GM12878 (cell line): ENCODE measurements at regions of chr1 and their contacts with region 1.

Region 1: GRCh38 chr1:48572646-48573261 is 100.8 kb upstream of the SPATA6 start:
- DNase-seq: no peak
- ATAC-seq: peak; percentile 91
- H3K4me3 ChIP-seq: no peak overlapping the region
- H3K27ac ChIP-seq: no peak overlapping the region
- H3K4me1 ChIP-seq: no peaks in the 10 kb centered on the region
- H3K27me3 ChIP-seq: no peaks in the 10 kb centered on the region; a peak in 1 of 4 replicates
- CTCF ChIP-seq: peak; percentile 62 to 66 (median 64); a peak in 5 of 6 replicates
- EP300 ChIP-seq: no peak
- POLR2A ChIP-seq: no peak
- RAD21 ChIP-seq: peak; percentile 72

Region 2: GRCh38 chr1:48697066-48697707 is 124.4 kb after region 1 on chr1:
- CTCF ChIA-PET with region 1: interaction called, 39 read pairs
- POLR2A ChIA-PET with region 1: no interaction called
- RAD21 ChIA-PET with region 1: no interaction called
- SMC1A ChIA-PET with region 1: interaction called, 3 read pairs
- in situ Hi-C with region 1: no loop called
- intact Hi-C with region 1: loop called (anchors 1 kb)
- DNase-seq: no peak
- ATAC-seq: peak; percentile 85
- H3K4me3 ChIP-seq: no peak overlapping the region
- H3K27ac ChIP-seq: no peak overlapping the region
- H3K4me1 ChIP-seq: no peaks in the 10 kb centered on the region
- H3K27me3 ChIP-seq: no peaks in the 10 kb centered on the region
- CTCF ChIP-seq: peak; percentile 81 to 89 (median 87)
- EP300 ChIP-seq: no peak
- POLR2A ChIP-seq: no peak
- RAD21 ChIP-seq: peak; percentile 46

Region 3: GRCh38 chr1:48817505-48818114 is 244.9 kb after region 1 on chr1:
- CTCF ChIA-PET with region 1: interaction called, 5 read pairs
- POLR2A ChIA-PET with region 1: no interaction called
- RAD21 ChIA-PET with region 1: no interaction called
- SMC1A ChIA-PET with region 1: interaction called, 3 read pairs
- in situ Hi-C with region 1: no loop called
- intact Hi-C with region 1: loop called (anchors 2 kb)
- DNase-seq: no peak
- ATAC-seq: peak; percentile 83
- H3K4me3 ChIP-seq: no peak overlapping the region
- H3K27ac ChIP-seq: no peak overlapping the region
- H3K4me1 ChIP-seq: no peaks in the 10 kb centered on the region
- H3K27me3 ChIP-seq: no peaks in the 10 kb centered on the region
- CTCF ChIP-seq: peak; percentile 66 to 78 (median 77)
- EP300 ChIP-seq: no peak
- POLR2A ChIP-seq: no peak
- RAD21 ChIP-seq: peak; percentile 81

Region 4: GRCh38 chr1:48870596-48870995 is 297.8 kb after region 1 on chr1:
- CTCF ChIA-PET with region 1: interaction called, 3 read pairs
- POLR2A ChIA-PET with region 1: no interaction called
- RAD21 ChIA-PET with region 1: no interaction called
- SMC1A ChIA-PET with region 1: no interaction called
- in situ Hi-C with region 1: no loop called
- intact Hi-C with region 1: loop called (anchors 1 kb)
- DNase-seq: no peak
- ATAC-seq: peak; percentile 72
- H3K4me3 ChIP-seq: no peak overlapping the region
- H3K27ac ChIP-seq: no peak overlapping the region
- H3K4me1 ChIP-seq: no peaks in the 10 kb centered on the region
- H3K27me3 ChIP-seq: no peaks in the 10 kb centered on the region
- CTCF ChIP-seq: peak; percentile 26 to 69 (median 54); a peak in 5 of 6 replicates
- EP300 ChIP-seq: no peak
- POLR2A ChIP-seq: no peak
- RAD21 ChIP-seq: peak; percentile 41

Region 5: GRCh38 chr1:50348449-50349241 is 1775.9 kb after region 1 on chr1:
- CTCF ChIA-PET with region 1: no interaction called
- POLR2A ChIA-PET with region 1: no interaction called
- RAD21 ChIA-PET with region 1: no interaction called
- SMC1A ChIA-PET with region 1: no interaction called
- in situ Hi-C with region 1: no loop called
- intact Hi-C with region 1: loop called (anchors 10 kb)
- DNase-seq: no peak
- ATAC-seq: peak; percentile 91
- H3K4me3 ChIP-seq: no peak overlapping the region
- H3K27ac ChIP-seq: no peak overlapping the region
- H3K4me1 ChIP-seq: no peaks in the 10 kb centered on the region
- H3K27me3 ChIP-seq: no peaks in the 10 kb centered on the region
- CTCF ChIP-seq: peak; percentile 75 to 86 (median 83)
- EP300 ChIP-seq: no peak
- POLR2A ChIP-seq: no peak
- RAD21 ChIP-seq: peak; percentile 84